Spleen (tissue), 13 donors: ENCODE measurements at regions of chr17 and their contacts with region 1.

Region 1: DNA sequence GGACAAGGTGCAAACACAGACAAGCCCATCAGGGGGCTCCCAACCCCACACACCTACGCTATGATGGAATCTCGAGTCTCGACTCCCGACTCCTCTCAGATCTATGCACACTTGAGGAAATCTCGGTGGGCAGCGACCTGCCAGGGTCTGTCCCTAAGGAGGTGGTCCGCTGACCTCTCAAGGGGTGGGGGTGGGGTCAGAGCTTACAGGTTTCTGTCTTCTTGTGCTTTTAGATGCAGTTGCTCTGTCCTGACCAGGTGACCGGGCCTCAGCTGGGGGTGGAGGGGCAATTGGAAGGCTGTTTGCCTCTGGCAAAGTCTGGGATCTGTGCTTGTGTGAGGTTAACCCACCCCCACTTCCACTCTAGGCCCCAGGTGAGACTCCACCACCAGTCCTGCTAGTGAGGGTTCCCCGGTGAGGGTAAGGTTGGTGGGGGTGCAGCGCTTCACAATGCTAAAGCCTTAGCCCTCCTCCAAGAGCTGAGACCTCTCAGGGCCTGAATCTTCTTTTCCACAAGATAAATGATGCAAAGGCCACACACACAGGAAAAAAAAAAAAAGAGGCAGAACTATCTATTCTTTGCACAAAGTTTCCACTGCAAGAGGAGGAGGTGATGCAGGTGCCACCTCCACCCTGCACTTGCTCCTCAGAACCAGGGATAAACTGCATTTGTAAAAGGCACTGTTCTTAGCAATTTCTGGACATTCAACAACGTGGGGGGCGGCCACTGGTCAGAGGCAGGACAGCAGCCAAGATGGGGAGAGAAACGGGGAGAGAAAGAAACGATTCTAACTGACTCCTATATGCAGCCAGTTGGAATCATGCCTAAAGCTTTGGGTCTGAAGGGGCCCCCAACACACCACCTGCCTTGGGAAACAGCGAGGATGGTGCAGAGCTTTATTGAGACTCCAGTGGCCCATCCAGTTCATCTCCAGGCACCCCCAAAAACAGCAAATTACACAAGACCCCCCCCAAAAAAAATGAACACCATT is 4.1 kb downstream of the CISD3 start:
- DNase-seq: no peak
- H3K4me3 ChIP-seq: no peak overlapping the region
- H3K27ac ChIP-seq: peak overlapping the region in 2 of 8 donors; percentile 91 to 93
- H3K4me1 ChIP-seq: peaks cover 15 to 66% (median 46%) of the 10 kb centered on the region in 6 donors
- H3K27me3 ChIP-seq: no peaks in the 10 kb centered on the region
- CTCF ChIP-seq: peak in 1 of 11 experiments; percentile 15
- POLR2A ChIP-seq: no peak

Region 2: DNA sequence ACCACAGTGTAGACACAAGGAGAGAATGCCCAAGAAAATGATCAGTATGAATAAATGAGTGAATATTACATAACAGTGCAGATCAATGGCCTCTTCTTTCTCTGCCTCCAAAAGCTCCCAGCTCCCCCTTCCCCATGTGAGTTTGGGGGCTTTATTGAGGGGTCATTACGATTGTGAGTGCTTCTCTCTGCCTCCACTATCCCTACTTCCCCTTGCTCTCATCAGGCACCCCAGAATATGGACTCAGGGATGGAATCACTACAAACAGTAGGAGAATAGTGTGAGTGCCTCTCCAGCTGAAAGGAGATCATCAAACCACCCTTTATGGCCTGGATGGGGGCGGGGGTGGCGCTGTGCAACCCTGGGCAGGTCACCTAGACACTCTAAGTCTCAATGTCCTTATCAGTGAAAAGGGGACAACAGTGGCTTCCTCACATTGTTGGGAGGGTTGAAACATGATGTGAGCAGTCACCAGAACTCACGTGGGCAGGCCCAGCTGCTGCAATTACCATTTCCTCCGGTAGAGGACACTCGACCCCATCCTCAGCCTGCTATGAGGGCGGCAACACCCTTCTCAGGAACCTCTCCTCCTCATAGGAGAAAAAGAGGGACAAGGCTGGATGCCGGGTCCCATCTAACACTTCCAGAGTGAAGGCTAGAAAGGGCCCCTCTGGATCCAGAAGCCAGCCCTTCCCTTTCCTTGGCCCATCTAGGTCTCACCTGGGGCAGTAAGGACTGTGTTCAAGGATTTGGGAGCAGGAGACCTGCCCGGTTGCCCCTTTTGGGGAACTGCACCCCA is 57.4 kb before region 1 on chr17:
- intact Hi-C with region 1: loop called (anchors 2 kb)
- DNase-seq: peak; percentile 91
- H3K4me3 ChIP-seq: no peak overlapping the region
- H3K27ac ChIP-seq: peak overlapping the region in 3 of 8 donors; percentile 20 to 50 (median 26)
- H3K4me1 ChIP-seq: peaks cover 19 to 65% (median 41%) of the 10 kb centered on the region in 6 donors
- H3K27me3 ChIP-seq: peaks cover 0 to 50% (median 37%) of the 10 kb centered on the region in 7 donors
- CTCF ChIP-seq: peak; percentile 86 to 98 (median 97)
- POLR2A ChIP-seq: no peak

Region 3: GRCh38 chr17:39668199-39668966 is 934.1 kb after region 1 on chr17 and contains the start of gene PNMT:
- intact Hi-C with region 1: no loop called
- DNase-seq: peak; percentile 93
- H3K4me3 ChIP-seq: peak within 1 kb of the TSS; percentile 13 to 72 (median 42)
- H3K27ac ChIP-seq: peak within 1 kb of the TSS in 1 of 8 donors; percentile 7
- H3K4me1 ChIP-seq: peaks cover 0 to 55% (median 23%) of the 10 kb centered on the region in 6 donors
- H3K27me3 ChIP-seq: peaks cover 4 to 78% (median 43%) of the 10 kb centered on the region in 7 donors
- CTCF ChIP-seq: peak; percentile 45 to 79 (median 65)
- POLR2A ChIP-seq: no peak
- total RNA-seq, gene PNMT: 0.47 to 2.4 (median 0.51) TPM in 3 of 7 donors, not detected in the others